ENCODE measurements at regions of chr13 and their contacts with region 1.

Region 1: GRCh38 chr13:102870677-102871415 is 25.0 kb downstream of the ERCC5 start:
- H3K4me3 ChIP-seq: no peak overlapping the region
- H3K27ac ChIP-seq: no peak overlapping the region
- H3K4me1 ChIP-seq: no peaks in the 10 kb centered on the region
- CTCF ChIP-seq: no peak

Region 2: GRCh38 chr13:102856557-102856956 is 14.3 kb before region 1 on chr13:
- CTCF ChIA-PET with region 1: interaction called, 10 read pairs
- POLR2A ChIA-PET with region 1: no interaction called
- H3K4me3 ChIP-seq: no peak overlapping the region
- H3K27ac ChIP-seq: no peak overlapping the region
- H3K4me1 ChIP-seq: no peaks in the 10 kb centered on the region
- CTCF ChIP-seq: no peak